H1 (cell line): ENCODE measurements at regions of chr12 and their contacts with region 1.

Region 1: GRCh38 chr12:117236456-117237001 is 46.3 kb upstream of the FBXO21 start:
- DNase-seq: peak; percentile 88 to 100
- H3K4me3 ChIP-seq: peak overlapping the region in 1 of 4 experiments; percentile 27; a peak in 1 of 8 replicates
- H3K27ac ChIP-seq: no peak overlapping the region; the same call in 1 of the 2 replicates
- H3K4me1 ChIP-seq: peaks cover 6 to 11% (median 9%) of the 10 kb centered on the region in 4 experiments; a peak in 4 of 7 replicates
- H3K27me3 ChIP-seq: no peaks in the 10 kb centered on the region
- CTCF ChIP-seq: peak; percentile 67 to 82 (median 72)
- EP300 ChIP-seq: peak in 1 of 2 experiments; percentile 20; a peak in 1 of 3 replicates
- POLR2A ChIP-seq: peak; percentile 22 to 82
- RAD21 ChIP-seq: peak; percentile 75 to 85

Region 2: DNA sequence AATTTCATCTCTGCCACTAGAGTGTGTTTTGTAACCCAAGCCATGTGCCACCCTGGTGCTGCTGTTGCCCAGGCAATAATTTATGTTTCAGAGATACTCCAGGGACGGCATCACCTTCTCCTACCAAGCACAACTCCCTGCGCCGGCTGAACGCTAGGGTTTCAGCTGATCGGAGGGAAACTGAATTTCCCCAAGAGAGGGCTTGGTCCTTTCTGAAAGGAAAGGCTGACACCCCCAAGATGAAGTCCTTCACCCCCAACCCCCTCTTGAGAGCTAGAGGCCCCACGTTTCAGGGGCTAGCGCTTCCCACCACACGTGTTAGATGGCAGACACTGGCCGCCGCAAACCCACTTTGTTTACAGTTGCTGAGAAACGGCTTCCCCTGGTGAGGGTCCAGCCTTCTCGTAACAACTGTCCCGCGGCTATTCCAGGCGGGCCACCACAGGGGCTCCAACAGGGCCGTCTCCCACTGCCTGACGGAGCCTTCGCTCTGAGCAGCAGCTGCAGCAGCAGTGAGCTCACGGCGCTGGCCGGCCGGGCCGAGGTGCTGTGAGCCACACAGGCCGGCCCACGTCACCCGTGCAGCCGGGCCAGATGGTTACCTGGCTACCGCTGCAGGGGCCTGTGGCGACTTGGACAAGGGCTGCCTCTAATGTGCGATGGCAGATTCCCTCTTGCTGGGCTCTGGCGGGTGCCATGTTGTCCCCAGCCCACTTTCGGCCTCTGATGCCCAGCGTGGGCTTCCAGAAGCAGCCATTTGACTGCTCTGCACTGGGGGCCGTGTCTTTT is 203.7 kb before region 1 on chr12:
- CTCF ChIA-PET with region 1: no interaction called
- POLR2A ChIA-PET with region 1: no interaction called
- DNase-seq: no peak
- H3K4me3 ChIP-seq: no peak overlapping the region
- H3K27ac ChIP-seq: no peak overlapping the region
- H3K4me1 ChIP-seq: peaks cover 0 to 10% (median 3%) of the 10 kb centered on the region in 4 experiments; a peak in 4 of 7 replicates
- H3K27me3 ChIP-seq: no peaks in the 10 kb centered on the region
- CTCF ChIP-seq: no peak
- EP300 ChIP-seq: no peak
- POLR2A ChIP-seq: no peak
- RAD21 ChIP-seq: no peak

Region 3: DNA sequence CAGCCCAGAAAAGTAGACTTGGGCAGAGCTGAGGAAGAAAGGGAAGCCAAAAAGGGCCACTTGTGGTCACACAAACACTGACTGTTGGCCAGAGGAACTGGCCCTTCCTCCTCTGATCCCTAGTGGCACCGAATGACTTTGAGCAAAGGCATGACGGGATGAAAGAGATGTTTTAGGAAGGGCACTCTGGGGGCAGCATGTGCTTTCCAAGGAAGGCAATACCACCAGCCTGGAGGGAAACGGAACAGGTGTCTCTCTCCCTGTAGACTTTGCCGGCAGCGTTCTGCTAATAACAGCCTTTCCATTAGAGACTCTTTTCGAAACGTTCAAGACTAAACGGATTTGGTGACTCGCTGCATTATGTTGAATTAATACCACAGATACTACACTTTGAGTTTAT is 34.0 kb before region 1 on chr12:
- CTCF ChIA-PET with region 1: interaction called, 17 read pairs
- POLR2A ChIA-PET with region 1: no interaction called
- DNase-seq: no peak
- H3K4me3 ChIP-seq: no peak overlapping the region
- H3K27ac ChIP-seq: no peak overlapping the region
- H3K4me1 ChIP-seq: peaks cover 0 to 4% (median 2%) of the 10 kb centered on the region in 4 experiments; a peak in 3 of 7 replicates
- H3K27me3 ChIP-seq: no peaks in the 10 kb centered on the region; a peak in 1 of 7 replicates
- CTCF ChIP-seq: no peak
- EP300 ChIP-seq: no peak
- POLR2A ChIP-seq: no peak
- RAD21 ChIP-seq: no peak

Region 4: DNA sequence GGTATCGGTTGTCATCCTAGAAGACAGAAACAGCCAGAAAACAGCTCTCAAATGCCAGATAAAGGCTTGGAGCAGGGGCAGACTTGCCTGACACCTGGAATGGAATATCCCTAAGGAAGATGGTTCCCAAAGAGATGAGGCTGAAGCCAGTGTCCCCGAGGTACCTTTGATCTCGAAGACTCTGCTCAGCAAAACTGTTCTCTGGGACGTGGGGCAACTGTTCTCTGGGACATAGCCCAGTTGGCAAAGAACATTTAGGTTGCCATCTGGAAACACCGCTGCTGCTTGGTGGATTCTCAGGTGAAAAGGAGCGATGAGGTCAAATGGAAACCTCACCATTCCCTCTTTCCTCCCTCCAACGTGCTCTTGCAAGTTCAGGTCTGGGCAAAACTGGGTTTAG is 18.4 kb before region 1 on chr12:
- CTCF ChIA-PET with region 1: interaction called, 65 read pairs
- POLR2A ChIA-PET with region 1: interaction called, 3 read pairs
- DNase-seq: no peak
- H3K4me3 ChIP-seq: no peak overlapping the region
- H3K27ac ChIP-seq: no peak overlapping the region
- H3K4me1 ChIP-seq: no peaks in the 10 kb centered on the region
- H3K27me3 ChIP-seq: no peaks in the 10 kb centered on the region
- CTCF ChIP-seq: no peak
- EP300 ChIP-seq: no peak
- POLR2A ChIP-seq: no peak
- RAD21 ChIP-seq: no peak

Region 5: GRCh38 chr12:117330441-117331113 is 94.0 kb after region 1 on chr12:
- CTCF ChIA-PET with region 1: interaction called, 10 read pairs
- POLR2A ChIA-PET with region 1: no interaction called
- DNase-seq: no peak
- H3K4me3 ChIP-seq: no peak overlapping the region
- H3K27ac ChIP-seq: no peak overlapping the region
- H3K4me1 ChIP-seq: peaks cover 0 to 5% (median 0%) of the 10 kb centered on the region in 4 experiments; a peak in 3 of 7 replicates
- H3K27me3 ChIP-seq: no peaks in the 10 kb centered on the region
- CTCF ChIP-seq: peak in 2 of 3 experiments; percentile 35 to 36; a peak in 3 of 4 replicates
- EP300 ChIP-seq: no peak
- POLR2A ChIP-seq: no peak
- RAD21 ChIP-seq: peak in 1 of 2 experiments; percentile 11; a peak in 1 of 4 replicates

Region 6: GRCh38 chr12:117587631-117588287 is 351.2 kb after region 1 on chr12:
- CTCF ChIA-PET with region 1: interaction called, 18 read pairs
- POLR2A ChIA-PET with region 1: no interaction called
- DNase-seq: peak; percentile 36 to 89
- H3K4me3 ChIP-seq: no peak overlapping the region
- H3K27ac ChIP-seq: no peak overlapping the region
- H3K4me1 ChIP-seq: peaks cover 6 to 10% (median 7%) of the 10 kb centered on the region in 4 experiments
- H3K27me3 ChIP-seq: no peaks in the 10 kb centered on the region
- CTCF ChIP-seq: peak; percentile 84 to 96 (median 92)
- EP300 ChIP-seq: no peak
- POLR2A ChIP-seq: no peak
- RAD21 ChIP-seq: peak; percentile 81 to 83

Region 7: GRCh38 chr12:117850048-117850447 is 613.5 kb after region 1 on chr12:
- CTCF ChIA-PET with region 1: interaction called, 11 read pairs
- POLR2A ChIA-PET with region 1: no interaction called
- DNase-seq: peak; percentile 29 to 57
- H3K4me3 ChIP-seq: no peak overlapping the region
- H3K27ac ChIP-seq: no peak overlapping the region
- H3K4me1 ChIP-seq: peaks cover 0 to 10% (median 3%) of the 10 kb centered on the region in 4 experiments; a peak in 4 of 7 replicates
- H3K27me3 ChIP-seq: no peaks in the 10 kb centered on the region
- CTCF ChIP-seq: peak; percentile 63 to 98 (median 94)
- EP300 ChIP-seq: no peak
- POLR2A ChIP-seq: no peak
- RAD21 ChIP-seq: peak; percentile 77 to 81